ENCODE measurements at regions of chr12 and their contacts with region 1.

Region 1: GRCh38 chr12:106986625-106987430 is at the start of gene MTERF2:
- DNase-seq: peak; percentile 94 to 96 (median 95)
- ATAC-seq: peak; percentile 98 to 99 (median 99)
- H3K4me3 ChIP-seq: peak within 1 kb of the TSS; percentile 61 to 85 (median 71)
- H3K27ac ChIP-seq: peak within 1 kb of the TSS; percentile 78 to 96 (median 90)
- H3K4me1 ChIP-seq: peaks cover 4 to 34% (median 17%) of the 10 kb centered on the region in 12 donors
- H3K27me3 ChIP-seq: no peaks in the 10 kb centered on the region
- CTCF ChIP-seq: peak in 2 of 12 donors; percentile 11 to 16
- POLR2A ChIP-seq: peak in 1 of 2 donors; percentile 93
- total RNA-seq, gene MTERF2: 14.9 to 46.1 (median 27.8) TPM

Region 2: DNA sequence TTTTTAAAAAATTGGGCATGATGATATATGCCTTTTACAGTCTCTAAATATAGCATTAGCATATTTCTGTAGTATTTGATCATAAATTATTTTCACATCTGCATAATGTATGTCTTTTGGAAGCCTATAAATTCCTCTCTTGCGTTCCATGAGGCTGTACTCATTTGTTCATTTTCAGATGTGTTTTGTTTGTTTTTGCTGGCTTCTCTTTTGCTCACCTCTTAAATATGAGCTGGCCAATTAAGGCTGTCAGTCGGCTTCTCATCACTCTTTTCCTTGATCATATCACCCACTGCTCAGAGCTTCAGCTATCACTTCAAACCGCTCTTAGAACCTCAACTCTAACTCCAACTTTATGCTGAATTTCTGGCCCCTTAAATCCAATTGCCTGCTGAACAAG is 24.5 kb before region 1 on chr12:
- intact Hi-C with region 1: loop called in 2 of 10 experiments (anchors 2 kb)
- DNase-seq: no peak
- ATAC-seq: no peak
- H3K4me3 ChIP-seq: no peak overlapping the region
- H3K27ac ChIP-seq: no peak overlapping the region
- H3K4me1 ChIP-seq: peaks cover 0 to 63% (median 32%) of the 10 kb centered on the region in 12 donors
- H3K27me3 ChIP-seq: no peaks in the 10 kb centered on the region
- CTCF ChIP-seq: no peak
- POLR2A ChIP-seq: no peak

Region 3: DNA sequence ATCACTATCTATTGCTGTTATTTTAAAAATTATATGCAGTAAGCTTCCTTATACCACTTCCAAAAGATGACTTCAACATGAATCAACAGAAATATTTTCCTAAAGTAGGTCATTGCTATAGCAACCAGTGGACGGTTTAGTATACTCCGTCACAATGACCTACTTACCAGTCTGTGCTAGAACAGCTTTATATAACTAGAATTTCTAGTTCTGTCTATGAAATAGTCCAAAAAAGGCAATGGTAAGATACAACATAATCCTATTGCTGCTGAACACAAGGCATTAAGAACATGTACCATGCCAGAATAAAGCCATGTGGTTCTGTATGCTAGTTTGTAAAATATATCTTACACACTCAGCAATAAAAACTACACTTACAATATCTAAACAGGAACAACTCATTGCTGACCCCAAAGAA is 40.8 kb after region 1 on chr12:
- intact Hi-C with region 1: loop called in 1 of 10 experiments (anchors 5 kb)
- DNase-seq: no peak
- ATAC-seq: peak; percentile 93 to 96 (median 94)
- H3K4me3 ChIP-seq: peak overlapping the region in 3 of 12 donors; percentile 1 to 12 (median 6)
- H3K27ac ChIP-seq: peak overlapping the region in 11 of 12 donors; percentile 26 to 82 (median 56)
- H3K4me1 ChIP-seq: peaks cover 3 to 63% (median 34%) of the 10 kb centered on the region in 12 donors
- H3K27me3 ChIP-seq: no peaks in the 10 kb centered on the region
- CTCF ChIP-seq: no peak
- POLR2A ChIP-seq: no peak

Measured in heart left ventricle (tissue), 16 donors.